GM12878 (cell line): ENCODE measurements at regions of chr11 and their contacts with region 1.

Region 1: GRCh38 chr11:35822815-35823495 is 120.9 kb upstream of the LDLRAD3 start:
- DNase-seq: no peak
- ATAC-seq: no peak
- H3K4me3 ChIP-seq: no peak overlapping the region
- H3K27ac ChIP-seq: no peak overlapping the region
- H3K4me1 ChIP-seq: no peaks in the 10 kb centered on the region
- H3K27me3 ChIP-seq: no peaks in the 10 kb centered on the region
- CTCF ChIP-seq: no peak
- EP300 ChIP-seq: no peak
- POLR2A ChIP-seq: no peak
- RAD21 ChIP-seq: no peak

Region 2: DNA sequence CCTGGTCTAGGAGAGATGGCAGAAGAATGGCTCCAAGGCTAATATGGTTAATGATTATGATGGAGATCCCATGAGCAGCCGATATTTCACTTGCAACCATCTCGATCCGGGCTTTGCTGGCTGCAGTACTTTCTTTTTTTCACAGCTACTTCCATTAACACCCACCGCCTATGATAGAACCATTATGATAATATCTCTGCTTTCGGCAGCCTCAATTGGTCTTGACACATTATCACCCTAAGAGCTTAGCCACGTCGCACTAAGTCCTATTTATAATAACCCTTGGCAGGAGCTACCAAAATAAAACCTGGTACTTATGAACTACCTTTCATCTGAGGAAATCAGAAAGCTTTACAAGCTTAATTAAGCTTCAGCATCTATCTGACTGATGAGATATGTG is 212.3 kb before region 1 on chr11:
- CTCF ChIA-PET with region 1: interaction called, 39 read pairs
- POLR2A ChIA-PET with region 1: no interaction called
- RAD21 ChIA-PET with region 1: interaction called, 41 read pairs
- SMC1A ChIA-PET with region 1: interaction called, 14 read pairs
- in situ Hi-C with region 1: no loop called
- intact Hi-C with region 1: no loop called
- DNase-seq: no peak
- ATAC-seq: no peak
- H3K4me3 ChIP-seq: no peak overlapping the region
- H3K27ac ChIP-seq: no peak overlapping the region
- H3K4me1 ChIP-seq: no peaks in the 10 kb centered on the region
- H3K27me3 ChIP-seq: no peaks in the 10 kb centered on the region; a peak in 2 of 4 replicates
- CTCF ChIP-seq: no peak
- EP300 ChIP-seq: no peak
- POLR2A ChIP-seq: no peak
- RAD21 ChIP-seq: no peak

Region 3: DNA sequence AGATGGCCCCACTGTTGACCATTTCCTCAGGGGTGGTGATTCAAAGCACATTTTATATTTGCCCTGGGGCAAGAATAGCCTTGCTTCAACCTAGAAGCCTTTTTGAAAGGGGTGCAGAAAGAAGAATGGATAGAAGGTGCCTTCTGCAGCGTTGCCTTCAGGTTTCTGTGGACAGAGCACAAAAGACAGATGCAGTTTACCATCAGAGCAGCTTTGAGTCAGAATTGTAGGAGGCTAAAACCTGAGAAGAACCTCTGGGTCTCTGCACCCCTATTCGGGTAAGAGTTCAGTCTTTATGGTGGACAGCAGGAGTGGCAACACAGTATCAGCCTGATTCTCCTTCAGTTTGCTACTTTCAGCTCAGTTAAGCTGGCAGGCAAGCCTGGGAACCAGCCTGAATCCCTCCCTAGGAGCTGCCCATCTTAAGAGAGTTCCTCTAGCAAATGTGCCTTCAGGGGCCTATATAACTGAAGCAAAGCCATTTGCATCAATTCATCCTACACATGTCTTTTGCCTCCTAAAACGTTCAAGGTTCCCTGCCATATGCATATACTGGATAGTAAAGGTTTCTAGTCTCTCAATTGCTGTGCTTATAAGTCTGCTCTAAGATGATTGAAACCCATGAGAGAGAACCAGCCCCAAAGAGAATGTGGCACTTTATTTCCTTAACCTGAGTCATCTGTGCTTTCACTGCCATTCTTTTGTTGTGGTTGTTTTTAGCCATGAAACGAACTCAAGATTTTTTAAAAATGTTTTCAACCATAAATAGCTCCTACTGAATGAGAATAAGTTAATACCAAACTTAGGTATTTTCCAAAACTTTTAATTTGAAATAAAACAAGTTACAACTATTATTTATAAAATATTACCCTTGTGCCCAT is 37.4 kb before region 1 on chr11:
- CTCF ChIA-PET with region 1: interaction called, 28 read pairs
- POLR2A ChIA-PET with region 1: no interaction called
- RAD21 ChIA-PET with region 1: interaction called, 10 read pairs
- SMC1A ChIA-PET with region 1: interaction called, 15 read pairs
- in situ Hi-C with region 1: no loop called
- intact Hi-C with region 1: no loop called
- DNase-seq: peak; percentile 43
- ATAC-seq: peak; percentile 86
- H3K4me3 ChIP-seq: no peak overlapping the region
- H3K27ac ChIP-seq: peak overlapping the region; percentile 66
- H3K4me1 ChIP-seq: peaks cover 17% of the 10 kb centered on the region
- H3K27me3 ChIP-seq: no peaks in the 10 kb centered on the region
- CTCF ChIP-seq: no peak
- EP300 ChIP-seq: no peak
- POLR2A ChIP-seq: no peak
- RAD21 ChIP-seq: no peak

Region 4: GRCh38 chr11:35838071-35838470 is 15.1 kb after region 1 on chr11:
- CTCF ChIA-PET with region 1: interaction called, 14 read pairs
- POLR2A ChIA-PET with region 1: no interaction called
- RAD21 ChIA-PET with region 1: interaction called, 3 read pairs
- SMC1A ChIA-PET with region 1: interaction called, 14 read pairs
- in situ Hi-C with region 1: no loop called
- intact Hi-C with region 1: no loop called
- DNase-seq: no peak
- ATAC-seq: no peak
- H3K4me3 ChIP-seq: no peak overlapping the region
- H3K27ac ChIP-seq: no peak overlapping the region
- H3K4me1 ChIP-seq: no peaks in the 10 kb centered on the region
- H3K27me3 ChIP-seq: no peaks in the 10 kb centered on the region
- CTCF ChIP-seq: no peak
- EP300 ChIP-seq: no peak
- POLR2A ChIP-seq: no peak
- RAD21 ChIP-seq: no peak

Region 5: DNA sequence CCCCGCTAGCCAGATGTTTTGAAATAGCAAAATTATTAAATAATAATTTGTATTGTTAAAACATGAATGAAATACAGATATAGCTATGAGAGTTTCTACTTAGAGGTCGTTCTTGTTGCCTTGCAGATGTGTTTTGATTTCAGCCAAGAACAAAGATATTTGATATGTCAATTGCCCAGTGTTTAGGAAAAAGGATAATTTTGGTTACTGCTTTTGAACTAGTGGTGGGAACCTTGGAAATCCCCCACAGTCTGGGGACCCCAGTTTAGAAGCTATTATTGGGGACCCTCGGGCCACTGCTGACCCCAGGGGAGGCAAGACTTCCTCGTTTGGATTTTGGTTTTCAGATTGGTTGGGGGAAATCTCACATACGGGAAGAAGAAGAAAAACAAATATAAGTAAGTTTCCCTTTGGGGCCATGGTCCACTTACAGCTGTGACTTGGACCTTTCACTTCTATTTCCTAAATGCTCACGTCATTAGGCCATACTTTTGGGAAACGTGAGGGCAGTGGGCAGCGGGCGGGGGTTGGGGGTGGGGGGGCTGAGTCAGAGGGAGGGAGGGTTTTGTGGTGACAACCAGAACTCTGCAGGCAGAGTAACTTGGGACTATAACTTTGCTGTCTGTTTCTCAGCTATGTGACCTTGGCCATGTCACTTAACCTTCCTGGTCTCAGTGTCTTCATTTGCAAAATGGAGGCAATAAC is 157.9 kb after region 1 on chr11:
- CTCF ChIA-PET with region 1: interaction called, 16 read pairs
- POLR2A ChIA-PET with region 1: no interaction called
- RAD21 ChIA-PET with region 1: interaction called, 12 read pairs
- SMC1A ChIA-PET with region 1: interaction called, 4 read pairs
- in situ Hi-C with region 1: no loop called
- intact Hi-C with region 1: no loop called
- DNase-seq: no peak
- ATAC-seq: peak; percentile 78
- H3K4me3 ChIP-seq: no peak overlapping the region
- H3K27ac ChIP-seq: no peak overlapping the region
- H3K4me1 ChIP-seq: peaks cover 6% of the 10 kb centered on the region; the same call in 1 of the 2 replicates
- H3K27me3 ChIP-seq: no peaks in the 10 kb centered on the region
- CTCF ChIP-seq: no peak
- EP300 ChIP-seq: peak in 1 of 2 experiments; percentile 25; a peak in 1 of 4 replicates
- POLR2A ChIP-seq: no peak
- RAD21 ChIP-seq: no peak

Region 6: GRCh38 chr11:36056160-36056751 is 233.3 kb after region 1 on chr11:
- CTCF ChIA-PET with region 1: interaction called, 22 read pairs
- POLR2A ChIA-PET with region 1: no interaction called
- RAD21 ChIA-PET with region 1: interaction called, 24 read pairs
- SMC1A ChIA-PET with region 1: interaction called, 18 read pairs
- in situ Hi-C with region 1: no loop called
- intact Hi-C with region 1: loop called (anchors 5 kb)
- DNase-seq: no peak
- ATAC-seq: peak; percentile 60
- H3K4me3 ChIP-seq: no peak overlapping the region
- H3K27ac ChIP-seq: no peak overlapping the region
- H3K4me1 ChIP-seq: no peaks in the 10 kb centered on the region; the same call in 1 of the 2 replicates
- H3K27me3 ChIP-seq: no peaks in the 10 kb centered on the region; a peak in 1 of 4 replicates
- CTCF ChIP-seq: peak; percentile 41 to 62 (median 53); a peak in 5 of 6 replicates
- EP300 ChIP-seq: no peak
- POLR2A ChIP-seq: no peak
- RAD21 ChIP-seq: peak; percentile 65

Region 7: DNA sequence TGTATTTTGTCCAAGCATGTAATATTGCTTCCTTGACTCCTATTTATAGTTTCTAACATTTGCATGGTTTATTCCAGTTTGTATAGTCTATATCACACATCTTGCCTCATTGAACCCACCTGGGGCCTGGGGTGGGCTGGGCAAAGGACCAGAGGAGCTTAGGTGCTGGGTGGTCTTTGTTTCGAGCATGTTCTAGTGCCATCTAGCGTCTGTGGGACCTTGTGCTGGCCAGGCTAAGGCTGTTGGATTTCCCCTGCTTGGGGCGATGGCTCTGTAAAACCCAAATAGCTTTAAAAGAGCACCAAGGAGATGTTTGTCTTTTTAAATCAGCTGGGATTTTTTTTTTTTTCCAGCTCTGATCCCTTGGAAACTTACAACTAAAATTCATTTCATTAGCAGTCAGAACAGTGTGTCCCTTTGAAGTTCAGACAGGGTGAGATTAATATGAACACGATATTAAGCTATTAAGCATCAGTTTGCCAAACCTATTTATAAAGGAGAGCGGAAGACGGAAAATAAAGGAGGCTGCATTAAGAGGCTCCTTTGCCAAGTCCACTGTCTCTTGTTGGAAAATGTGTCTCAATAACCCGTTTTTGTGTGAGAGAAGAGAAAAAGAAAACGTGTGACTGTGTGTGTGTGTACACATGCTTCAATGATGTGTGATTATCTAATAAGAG is 308.9 kb after region 1 on chr11:
- CTCF ChIA-PET with region 1: interaction called, 82 read pairs
- POLR2A ChIA-PET with region 1: interaction called, 4 read pairs
- RAD21 ChIA-PET with region 1: interaction called, 66 read pairs
- SMC1A ChIA-PET with region 1: interaction called, 58 read pairs
- in situ Hi-C with region 1: no loop called
- intact Hi-C with region 1: loop called (anchors 1 kb)
- DNase-seq: no peak
- ATAC-seq: peak; percentile 95
- H3K4me3 ChIP-seq: no peak overlapping the region
- H3K27ac ChIP-seq: no peak overlapping the region
- H3K4me1 ChIP-seq: no peaks in the 10 kb centered on the region
- H3K27me3 ChIP-seq: peaks cover 0 to 2% of the 10 kb centered on the region in 2 experiments; a peak in 2 of 4 replicates
- CTCF ChIP-seq: peak; percentile 63 to 77 (median 74)
- EP300 ChIP-seq: no peak
- POLR2A ChIP-seq: no peak
- RAD21 ChIP-seq: peak; percentile 78

Region 8: GRCh38 chr11:36316049-36316772 is 493.3 kb after region 1 on chr11:
- CTCF ChIA-PET with region 1: no interaction called
- POLR2A ChIA-PET with region 1: no interaction called
- RAD21 ChIA-PET with region 1: no interaction called
- SMC1A ChIA-PET with region 1: no interaction called
- in situ Hi-C with region 1: no loop called
- intact Hi-C with region 1: no loop called
- DNase-seq: no peak
- ATAC-seq: no peak
- H3K4me3 ChIP-seq: no peak overlapping the region
- H3K27ac ChIP-seq: no peak overlapping the region
- H3K4me1 ChIP-seq: no peaks in the 10 kb centered on the region
- H3K27me3 ChIP-seq: peaks cover 0 to 8% of the 10 kb centered on the region in 2 experiments; a peak in 2 of 4 replicates
- CTCF ChIP-seq: no peak
- EP300 ChIP-seq: no peak
- POLR2A ChIP-seq: no peak
- RAD21 ChIP-seq: no peak